ENCODE measurements at regions of chr11 and their contacts with region 1.

Region 1: DNA sequence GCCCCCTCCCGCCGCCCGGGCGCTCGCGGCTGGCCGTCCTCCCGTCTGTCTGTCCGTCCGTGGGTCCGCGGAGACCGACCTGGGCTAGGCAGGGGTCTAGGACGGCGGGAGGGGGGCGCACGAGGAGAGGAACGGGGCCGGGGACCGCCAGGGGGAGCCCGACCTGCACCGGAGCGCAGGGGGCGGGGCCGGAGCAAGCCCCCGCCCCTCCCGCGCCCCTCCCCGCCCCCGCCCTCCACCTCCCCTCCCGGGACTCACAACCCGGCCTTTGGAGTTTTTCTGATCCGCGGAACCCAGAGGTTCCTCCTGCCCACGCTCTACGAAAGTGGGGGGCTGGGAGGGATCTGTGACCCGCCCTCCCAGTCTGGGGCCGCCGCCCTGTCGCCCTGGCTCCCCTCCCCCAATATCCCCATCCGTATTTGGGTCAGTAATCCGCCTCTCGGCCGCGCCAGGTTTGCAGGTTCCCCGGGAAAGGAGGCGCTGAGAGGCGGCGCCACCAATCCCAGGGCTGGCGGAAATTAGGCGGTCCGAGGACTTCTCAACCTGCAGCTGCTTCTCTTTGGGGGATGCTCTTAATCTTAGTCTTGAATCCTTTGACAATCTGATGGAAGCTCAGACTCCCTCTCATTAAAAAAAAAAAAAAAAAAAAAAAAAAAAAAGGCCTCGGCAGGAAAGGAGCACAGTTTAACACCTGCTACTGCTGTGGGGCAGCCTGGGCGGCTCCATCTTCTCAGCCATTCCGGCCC is 925 bp upstream of the KCNJ11 start:
- DNase-seq: peak; percentile 41 to 89 (median 70)
- ATAC-seq: peak; percentile 84 to 92 (median 88)
- H3K4me3 ChIP-seq: peak overlapping the region; percentile 66 to 74
- H3K4me3 Mint-ChIP-seq: peak overlapping the region; percentile 80 to 84 (median 82)
- H3K27ac ChIP-seq: no peak overlapping the region
- H3K27ac Mint-ChIP-seq: peak overlapping the region in 1 of 2 donors; percentile 48
- H3K4me1 ChIP-seq: peaks cover 0 to 14% of the 10 kb centered on the region in 2 experiments
- H3K4me1 Mint-ChIP-seq: peaks cover 0 to 6% (median 5%) of the 10 kb centered on the region in 3 donors
- H3K27me3 ChIP-seq: peaks cover 0 to 14% of the 10 kb centered on the region in 2 experiments
- H3K27me3 Mint-ChIP-seq: no peaks in the 10 kb centered on the region

Region 2: DNA sequence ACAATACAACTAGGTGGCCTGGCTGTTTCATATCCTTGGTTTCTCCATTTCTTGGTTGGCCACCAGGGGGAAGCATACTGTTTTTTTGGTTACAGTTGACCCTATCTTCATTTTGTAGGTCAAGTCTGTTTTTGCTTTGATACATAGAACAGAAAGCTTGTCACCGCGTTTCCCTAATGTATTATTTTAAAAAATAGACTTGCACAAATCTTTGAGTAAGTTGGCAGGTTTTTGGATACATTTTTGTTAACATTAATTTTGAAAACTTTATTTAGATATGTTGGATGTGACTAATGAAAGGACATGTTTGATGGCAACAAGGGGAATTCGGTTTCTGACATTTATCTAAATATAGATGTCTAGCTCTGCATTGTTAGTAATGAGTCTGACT is 34.8 kb before region 1 on chr11:
- CTCF ChIA-PET with region 1: interaction called, 8 to 13 read pairs
- POLR2A ChIA-PET with region 1: interaction called in 1 of 2 experiments, 3 read pairs
- DNase-seq: peak in 30 of 35 experiments; percentile 13 to 79 (median 40)
- ATAC-seq: peak in 1 of 4 experiments; percentile 23
- H3K4me3 ChIP-seq: no peak overlapping the region
- H3K4me3 Mint-ChIP-seq: peak overlapping the region; percentile 86 to 94 (median 87)
- H3K27ac ChIP-seq: no peak overlapping the region
- H3K27ac Mint-ChIP-seq: peak overlapping the region in 1 of 2 donors; percentile 59
- H3K4me1 ChIP-seq: peaks cover 17 to 22% of the 10 kb centered on the region in 2 experiments
- H3K4me1 Mint-ChIP-seq: peaks cover 25 to 37% (median 30%) of the 10 kb centered on the region in 3 donors
- H3K27me3 ChIP-seq: peaks cover 0 to 4% of the 10 kb centered on the region in 2 experiments
- H3K27me3 Mint-ChIP-seq: peaks cover 0 to 1% of the 10 kb centered on the region in 2 donors

Region 3: DNA sequence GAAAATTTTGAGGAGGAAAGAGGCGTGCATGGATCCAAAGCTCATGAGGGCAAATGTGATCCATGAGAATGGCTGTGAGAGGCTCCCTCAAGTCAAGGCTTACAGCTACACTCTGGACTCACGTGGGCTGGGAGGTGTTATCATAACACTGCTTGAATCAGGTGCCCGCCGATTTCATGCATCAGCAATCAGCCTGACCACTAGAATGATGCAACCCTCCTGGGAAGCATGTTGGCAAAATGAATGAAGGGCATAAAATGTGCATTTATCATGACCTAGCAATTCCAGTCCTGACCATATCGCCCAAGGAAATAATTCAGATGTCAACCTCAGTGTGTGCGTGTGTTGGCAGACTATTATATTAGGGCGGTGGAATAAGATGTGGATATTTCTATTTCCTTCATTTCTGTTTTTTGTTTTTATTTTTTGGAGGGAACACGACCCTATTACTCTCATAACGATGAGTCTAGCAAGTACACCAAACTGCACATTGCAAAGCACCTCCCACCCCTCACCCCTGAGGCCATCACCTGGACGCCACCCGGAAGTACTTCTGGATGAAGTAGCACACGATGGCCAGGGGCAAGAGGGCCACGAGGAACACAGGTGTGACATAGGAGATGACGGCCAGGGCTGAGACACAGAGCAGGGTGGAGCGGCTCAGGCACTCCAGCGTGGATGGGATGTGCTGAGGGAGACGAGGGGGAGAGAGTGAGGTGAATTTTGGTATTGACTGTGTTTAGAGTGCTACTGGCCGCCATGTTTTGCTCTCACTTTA is 14.8 kb after region 1 on chr11:
- CTCF ChIA-PET with region 1: no interaction called
- POLR2A ChIA-PET with region 1: no interaction called
- DNase-seq: no peak
- ATAC-seq: no peak
- H3K4me3 ChIP-seq: no peak overlapping the region
- H3K4me3 Mint-ChIP-seq: no peak overlapping the region
- H3K27ac ChIP-seq: no peak overlapping the region
- H3K27ac Mint-ChIP-seq: no peak overlapping the region
- H3K4me1 ChIP-seq: no peaks in the 10 kb centered on the region
- H3K4me1 Mint-ChIP-seq: no peaks in the 10 kb centered on the region
- H3K27me3 ChIP-seq: peaks cover 0 to 2% of the 10 kb centered on the region in 2 experiments
- H3K27me3 Mint-ChIP-seq: no peaks in the 10 kb centered on the region

Region 4: DNA sequence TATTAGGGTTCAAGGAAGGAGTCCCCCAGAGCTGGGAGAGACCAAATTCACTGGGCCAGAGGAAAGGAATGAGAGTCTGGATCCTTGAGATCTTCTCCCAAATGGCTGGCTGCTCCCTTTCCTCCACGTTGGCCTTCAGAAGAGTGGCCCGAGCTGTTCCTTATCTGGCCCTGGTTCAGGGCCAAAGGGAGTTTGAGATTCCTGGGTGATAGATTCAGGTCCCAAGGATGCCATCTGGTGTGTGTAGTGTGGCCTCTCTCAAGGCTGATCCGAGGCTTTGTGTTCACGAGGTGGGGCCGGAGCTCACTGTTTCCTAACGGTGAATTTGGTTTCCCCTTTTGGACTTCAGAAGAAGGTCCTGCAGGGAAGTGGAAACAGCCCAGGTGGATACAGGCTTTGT is 104.6 kb after region 1 on chr11:
- CTCF ChIA-PET with region 1: no interaction called
- POLR2A ChIA-PET with region 1: no interaction called
- DNase-seq: no peak
- ATAC-seq: no peak
- H3K4me3 ChIP-seq: no peak overlapping the region
- H3K4me3 Mint-ChIP-seq: no peak overlapping the region
- H3K27ac ChIP-seq: no peak overlapping the region
- H3K27ac Mint-ChIP-seq: no peak overlapping the region
- H3K4me1 ChIP-seq: no peaks in the 10 kb centered on the region
- H3K4me1 Mint-ChIP-seq: no peaks in the 10 kb centered on the region
- H3K27me3 ChIP-seq: peaks cover 0 to 34% of the 10 kb centered on the region in 2 experiments
- H3K27me3 Mint-ChIP-seq: peaks cover under 1 to 17% of the 10 kb centered on the region in 2 donors

Measured in T-cell (primary cell).